Left ventricle myocardium superior (tissue), 1 donor: ENCODE measurements at regions of chr1 and their contacts with region 1.

Region 1: DNA sequence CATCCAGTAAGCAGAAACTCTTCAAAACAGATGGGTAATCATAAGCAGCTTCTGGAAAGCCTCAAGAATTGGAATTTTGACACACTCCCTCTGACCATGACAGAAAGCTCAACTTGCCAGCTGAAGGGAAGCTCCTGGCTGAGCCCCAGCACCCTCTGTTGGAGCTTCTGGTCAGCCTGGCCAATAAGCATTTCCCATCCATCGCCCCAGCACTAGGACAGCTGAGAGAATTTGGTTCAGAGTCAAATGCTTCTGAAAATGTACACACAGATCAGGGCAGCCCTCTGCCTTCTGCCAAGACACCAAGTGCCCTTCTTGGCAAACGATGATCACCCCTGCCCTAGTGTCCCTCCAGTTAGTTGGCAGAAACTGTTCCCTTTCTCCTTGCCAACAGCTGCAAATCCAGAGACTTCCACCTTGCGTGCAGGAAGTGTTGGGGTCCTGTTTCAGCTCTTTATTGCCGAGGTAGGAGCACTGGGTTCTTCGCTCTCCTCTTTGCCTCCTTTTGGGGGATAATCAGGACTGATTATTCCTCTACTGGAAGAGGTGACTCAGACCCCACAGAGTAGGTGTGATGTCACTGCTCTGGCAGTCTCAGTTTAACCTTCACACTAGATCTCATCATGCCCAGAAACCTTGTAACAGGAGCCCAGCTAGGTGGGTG is 11.9 kb downstream of the PIGV start:
- DNase-seq: peak; percentile 84
- ATAC-seq: peak; percentile 91

Region 2: GRCh38 chr1:26677306-26678115 is 122.1 kb before region 1 on chr1:
- intact Hi-C with region 1: loop called (anchors 10 kb)
- DNase-seq: peak; percentile 84
- ATAC-seq: peak; percentile 97

Region 3: DNA sequence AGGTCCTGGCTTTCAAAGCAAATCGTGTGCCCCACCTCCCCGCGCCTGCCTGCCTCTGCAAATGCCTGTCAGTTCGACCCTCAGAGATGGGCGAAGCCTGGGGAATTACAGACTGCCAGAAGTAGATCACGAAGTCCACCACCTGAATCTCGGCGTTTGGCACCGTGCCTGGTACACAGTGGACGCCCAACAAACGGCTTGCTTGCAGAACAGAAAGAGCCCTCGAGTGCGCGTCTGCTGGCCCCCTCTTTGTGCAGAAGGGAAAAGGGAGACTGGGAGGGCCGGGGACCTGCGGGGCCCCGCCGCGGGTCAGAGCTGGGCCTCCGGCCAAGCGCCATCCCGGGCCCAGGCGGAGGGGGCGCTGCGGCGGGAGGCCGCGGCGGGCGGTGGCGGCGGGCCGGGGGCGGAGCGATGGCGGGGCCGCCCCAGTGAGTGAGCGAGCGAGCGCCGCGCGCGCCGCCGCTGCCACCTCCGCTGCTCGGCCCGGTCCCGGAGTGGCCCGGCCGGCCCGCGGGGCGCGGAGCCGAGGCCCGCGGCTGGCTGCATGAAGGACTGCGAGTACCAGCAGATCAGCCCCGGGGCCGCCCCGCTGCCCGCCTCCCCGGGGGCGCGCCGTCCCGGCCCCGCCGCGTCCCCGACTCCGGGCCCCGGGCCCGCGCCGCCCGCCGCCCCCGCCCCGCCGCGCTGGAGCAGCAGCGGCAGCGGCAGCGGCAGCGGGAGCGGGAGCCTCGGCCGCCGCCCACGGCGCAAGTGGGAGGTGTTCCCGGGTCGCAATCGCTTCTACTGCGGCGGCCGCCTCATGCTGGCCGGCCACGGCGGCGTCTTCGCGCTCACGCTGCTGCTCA is 26.9 kb after region 1 on chr1 and contains the start of gene ZDHHC18:
- intact Hi-C with region 1: no loop called
- DNase-seq: peak; percentile 89
- ATAC-seq: peak; percentile 81
- total RNA-seq, gene ZDHHC18: 18.1 TPM

Region 4: DNA sequence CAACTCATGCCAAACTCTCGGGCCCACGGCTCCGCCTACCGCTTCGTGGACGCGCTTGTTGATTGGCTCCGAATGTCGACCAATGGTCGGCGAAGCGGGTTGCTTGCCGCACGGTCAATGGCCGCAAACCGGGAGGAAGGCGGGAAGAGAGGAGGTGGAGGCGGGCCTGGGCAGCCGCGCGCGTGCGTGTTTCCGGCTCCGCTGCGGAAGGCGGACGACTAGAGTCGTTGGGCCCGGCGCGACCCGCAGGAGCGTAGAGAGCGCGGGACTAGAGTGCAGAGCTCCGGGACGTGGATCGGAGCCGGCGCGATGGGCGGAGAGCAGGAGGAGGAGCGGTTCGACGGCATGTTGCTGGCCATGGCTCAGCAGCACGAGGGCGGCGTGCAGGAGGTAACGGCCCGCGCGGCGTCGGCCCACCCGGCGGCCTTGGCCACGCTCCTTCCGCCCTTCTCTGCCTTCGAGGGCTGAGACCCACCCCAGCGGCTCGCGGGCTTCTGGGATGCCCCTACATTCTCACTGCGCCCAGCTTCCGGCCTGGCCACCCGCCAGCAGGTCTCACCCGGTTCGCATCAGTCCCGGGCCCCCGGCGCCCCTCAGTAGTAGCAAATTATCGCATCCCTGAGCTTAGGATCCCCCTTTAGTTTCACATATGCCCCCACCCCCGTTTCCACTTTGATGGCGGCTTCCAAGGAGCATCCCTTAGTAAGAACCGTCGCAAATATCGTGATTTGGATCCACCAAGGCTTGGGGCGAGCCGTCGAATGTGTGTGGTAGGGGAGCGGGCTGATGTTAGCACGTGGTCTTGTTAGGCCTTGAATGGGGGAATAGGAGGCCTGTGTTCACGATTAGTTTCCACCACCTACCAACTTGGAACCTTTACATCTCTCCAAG is 122.2 kb after region 1 on chr1 and contains the start of gene NUDC:
- intact Hi-C with region 1: no loop called
- DNase-seq: peak; percentile 97
- ATAC-seq: peak; percentile 99
- total RNA-seq, gene NUDC: 73.3 TPM